Ovary (tissue), 10 donors: ENCODE measurements at regions of chr5 and their contacts with region 1.

Region 1: GRCh38 chr5:81506900-81507588 is 113.1 kb upstream of the ACOT12 start:
- DNase-seq: peak in 4 of 5 donors; percentile 36 to 74 (median 48)
- H3K4me3 ChIP-seq: no peak overlapping the region
- H3K27ac ChIP-seq: peak overlapping the region in 1 of 2 donors; percentile 77
- H3K4me1 ChIP-seq: no peaks in the 10 kb centered on the region
- H3K27me3 ChIP-seq: no peaks in the 10 kb centered on the region
- CTCF ChIP-seq: peak; percentile 61 to 91 (median 87)
- EP300 ChIP-seq: no peak
- POLR2A ChIP-seq: no peak

Region 2: DNA sequence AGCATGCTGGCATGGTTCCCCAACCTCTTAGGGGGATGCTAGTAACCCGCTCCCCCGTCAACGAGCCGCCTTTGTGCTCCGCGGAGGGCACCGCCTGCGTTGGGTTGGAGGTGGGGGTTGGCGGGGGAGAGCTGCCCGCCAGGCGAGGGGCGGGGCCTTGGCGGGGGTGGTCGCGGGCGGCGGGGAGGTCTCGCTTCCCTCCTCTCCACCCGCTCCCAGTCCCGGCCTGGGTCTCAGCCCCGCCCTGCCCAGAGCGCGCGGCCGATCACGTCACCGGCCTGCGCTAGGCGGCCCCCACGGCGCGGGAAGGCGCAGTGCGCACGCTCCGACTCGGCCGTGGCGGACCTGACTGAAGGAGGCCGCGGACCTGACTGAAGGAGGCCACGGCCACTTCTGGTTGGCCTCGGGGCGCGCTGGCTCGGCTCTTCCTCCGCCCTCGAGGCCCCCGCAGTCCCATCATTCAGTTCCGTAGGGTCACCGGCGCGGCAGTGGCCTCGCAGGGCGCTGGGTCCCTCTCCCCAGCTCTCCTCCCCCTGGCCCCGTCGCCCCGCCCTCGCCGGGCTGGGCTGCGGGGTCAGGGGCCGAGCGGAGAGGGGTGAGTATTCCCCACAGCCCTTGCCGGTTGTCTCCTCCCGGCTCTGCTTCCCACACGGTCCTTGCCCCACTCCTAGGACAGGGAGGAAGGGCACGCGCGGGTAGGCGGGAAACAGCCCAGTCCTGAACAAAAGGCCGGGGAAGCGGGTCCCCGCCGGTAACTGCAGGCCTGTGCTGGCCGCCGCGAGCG is 464.9 kb after region 1 on chr5 and contains the start of gene ATG10:
- intact Hi-C with region 1: loop called in 1 of 4 experiments (anchors 5 kb)
- DNase-seq: peak; percentile 93 to 96 (median 96)
- H3K4me3 ChIP-seq: peak within 1 kb of the TSS; percentile 67
- H3K27ac ChIP-seq: peak within 1 kb of the TSS; percentile 97 to 100
- H3K4me1 ChIP-seq: no peaks in the 10 kb centered on the region
- H3K27me3 ChIP-seq: no peaks in the 10 kb centered on the region
- CTCF ChIP-seq: peak in 1 of 3 donors; percentile 18
- EP300 ChIP-seq: no peak
- POLR2A ChIP-seq: peak; percentile 98
- total RNA-seq, gene ATG10: 2.6 to 6.1 (median 4.6) TPM

Region 3: GRCh38 chr5:82158755-82159413 is 651.8 kb after region 1 on chr5:
- intact Hi-C with region 1: loop called in 1 of 4 experiments (anchors 10 kb)
- DNase-seq: no peak
- H3K4me3 ChIP-seq: no peak overlapping the region
- H3K27ac ChIP-seq: no peak overlapping the region
- H3K4me1 ChIP-seq: peaks cover 2% of the 10 kb centered on the region
- H3K27me3 ChIP-seq: no peaks in the 10 kb centered on the region
- CTCF ChIP-seq: no peak
- EP300 ChIP-seq: no peak
- POLR2A ChIP-seq: no peak